CD4-positive, alpha-beta memory T cell (primary cell): ENCODE measurements at regions of chr16 and their contacts with region 1.

Region 1: DNA sequence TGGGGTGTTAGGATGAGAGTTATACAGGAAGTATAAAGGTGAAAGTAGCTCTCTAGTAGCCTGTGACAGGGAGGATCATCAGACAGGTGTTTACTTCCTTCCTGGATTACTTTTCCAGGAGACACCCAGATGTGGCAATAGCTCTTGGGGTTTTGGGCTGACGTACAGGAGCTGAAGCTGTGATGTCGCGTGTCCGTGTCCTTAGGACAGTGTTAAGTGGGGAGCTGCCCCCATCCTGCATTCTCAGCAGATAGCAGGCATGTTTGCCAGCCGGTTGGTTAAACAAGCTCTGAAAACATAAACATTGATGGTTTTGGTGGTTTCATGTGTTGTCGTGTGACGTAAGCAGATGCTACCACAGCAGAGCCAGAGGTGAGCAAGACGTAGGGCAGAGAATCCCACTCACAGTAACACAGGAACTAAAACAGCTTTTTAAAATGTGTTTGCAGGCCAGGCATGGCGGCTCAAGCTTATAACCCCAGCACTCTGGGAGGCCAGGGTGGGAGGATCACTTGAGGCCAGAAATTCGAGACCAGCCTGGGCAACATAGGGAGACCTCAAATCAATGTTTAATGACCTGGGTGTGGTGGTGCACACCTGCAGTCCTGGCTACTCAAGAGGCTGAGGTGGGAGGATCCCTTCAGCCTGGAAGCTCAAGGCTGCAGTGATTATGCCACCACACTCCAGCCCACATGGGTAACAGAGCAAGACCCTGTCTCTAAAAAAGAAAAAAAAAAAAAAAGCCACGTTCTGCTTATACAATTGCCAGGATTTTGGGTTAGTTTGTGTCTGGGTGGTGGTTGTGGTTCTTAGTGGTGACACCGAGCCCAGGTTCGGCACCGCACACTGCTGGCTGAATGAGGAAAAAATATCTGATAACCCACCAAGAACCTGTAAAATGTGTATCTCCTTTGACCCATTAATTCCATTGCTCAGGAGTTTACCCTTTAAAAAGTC is 18.2 kb upstream of the IL17C start:
- DNase-seq: peak; percentile 90 to 95 (median 92)
- H3K4me3 ChIP-seq: no peak overlapping the region
- H3K4me3 Mint-ChIP-seq: peak overlapping the region; percentile 46 to 85 (median 68)
- H3K27ac ChIP-seq: peak overlapping the region; percentile 65
- H3K27ac Mint-ChIP-seq: peak overlapping the region; percentile 98 to 100 (median 99)
- H3K4me1 ChIP-seq: peaks cover 45% of the 10 kb centered on the region
- H3K4me1 Mint-ChIP-seq: peaks cover 16 to 54% (median 31%) of the 10 kb centered on the region in 4 donors
- H3K27me3 ChIP-seq: no peaks in the 10 kb centered on the region
- H3K27me3 Mint-ChIP-seq: peaks cover 0 to 1% of the 10 kb centered on the region in 2 donors

Region 2: GRCh38 chr16:88382491-88383400 is 237.4 kb before region 1 on chr16 and contains the start of gene ZNF469:
- CTCF ChIA-PET with region 1: no interaction called
- POLR2A ChIA-PET with region 1: no interaction called
- intact Hi-C with region 1: no loop called
- DNase-seq: no peak
- H3K4me3 ChIP-seq: no peak within 1 kb of the TSS
- H3K4me3 Mint-ChIP-seq: peak within 1 kb of the TSS in 6 of 8 donors; percentile 29 to 67 (median 46)
- H3K27ac ChIP-seq: no peak within 1 kb of the TSS
- H3K27ac Mint-ChIP-seq: no peak within 1 kb of the TSS
- H3K4me1 ChIP-seq: peaks cover 6% of the 10 kb centered on the region
- H3K4me1 Mint-ChIP-seq: peaks cover 0 to 8% (median 4%) of the 10 kb centered on the region in 4 donors
- H3K27me3 ChIP-seq: peaks cover 11% of the 10 kb centered on the region
- H3K27me3 Mint-ChIP-seq: peaks cover 24 to 26% of the 10 kb centered on the region in 2 donors
- total RNA-seq, gene ZNF469: 0.61 to 0.64 TPM

Region 3: GRCh38 chr16:88589441-88589840 is 30.7 kb before region 1 on chr16:
- CTCF ChIA-PET with region 1: interaction called, 4 read pairs
- POLR2A ChIA-PET with region 1: interaction called, 15 read pairs
- intact Hi-C with region 1: no loop called
- DNase-seq: no peak
- H3K4me3 ChIP-seq: no peak overlapping the region
- H3K4me3 Mint-ChIP-seq: peak overlapping the region in 7 of 8 donors; percentile 0 to 67 (median 33)
- H3K27ac ChIP-seq: peak overlapping the region; percentile 28
- H3K27ac Mint-ChIP-seq: peak overlapping the region; percentile 31 to 96 (median 86)
- H3K4me1 ChIP-seq: peaks cover 47% of the 10 kb centered on the region
- H3K4me1 Mint-ChIP-seq: peaks cover 33 to 55% (median 50%) of the 10 kb centered on the region in 4 donors
- H3K27me3 ChIP-seq: no peaks in the 10 kb centered on the region
- H3K27me3 Mint-ChIP-seq: no peaks in the 10 kb centered on the region

Region 4: GRCh38 chr16:88639231-88640038 is 19.3 kb after region 1 on chr16:
- CTCF ChIA-PET with region 1: interaction called, 3 read pairs
- POLR2A ChIA-PET with region 1: interaction called, 34 read pairs
- intact Hi-C with region 1: loop called (anchors 2 kb)
- DNase-seq: no peak
- H3K4me3 ChIP-seq: no peak overlapping the region
- H3K4me3 Mint-ChIP-seq: peak overlapping the region in 2 of 8 donors; percentile 58 to 63
- H3K27ac ChIP-seq: no peak overlapping the region
- H3K27ac Mint-ChIP-seq: peak overlapping the region in 2 of 7 donors; percentile 84 to 92
- H3K4me1 ChIP-seq: peaks cover 50% of the 10 kb centered on the region
- H3K4me1 Mint-ChIP-seq: peaks cover 15 to 48% (median 32%) of the 10 kb centered on the region in 4 donors
- H3K27me3 ChIP-seq: peaks cover 11% of the 10 kb centered on the region
- H3K27me3 Mint-ChIP-seq: peaks cover 0 to 9% of the 10 kb centered on the region in 2 donors

Region 5: GRCh38 chr16:88662843-88663606 is 42.9 kb after region 1 on chr16 and contains the start of gene MVD:
- CTCF ChIA-PET with region 1: interaction called, 3 read pairs
- POLR2A ChIA-PET with region 1: interaction called, 14 read pairs
- intact Hi-C with region 1: no loop called
- DNase-seq: peak; percentile 93 to 96 (median 95)
- H3K4me3 ChIP-seq: peak within 1 kb of the TSS; percentile 65 to 95
- H3K4me3 Mint-ChIP-seq: peak within 1 kb of the TSS; percentile 91 to 95 (median 94)
- H3K27ac ChIP-seq: peak within 1 kb of the TSS; percentile 83
- H3K27ac Mint-ChIP-seq: peak within 1 kb of the TSS; percentile 80 to 98 (median 97)
- H3K4me1 ChIP-seq: peaks cover 16% of the 10 kb centered on the region
- H3K4me1 Mint-ChIP-seq: peaks cover 11 to 22% (median 15%) of the 10 kb centered on the region in 4 donors
- H3K27me3 ChIP-seq: no peaks in the 10 kb centered on the region
- H3K27me3 Mint-ChIP-seq: no peaks in the 10 kb centered on the region
- total RNA-seq, gene MVD: 49.2 to 57.0 TPM

Region 6: DNA sequence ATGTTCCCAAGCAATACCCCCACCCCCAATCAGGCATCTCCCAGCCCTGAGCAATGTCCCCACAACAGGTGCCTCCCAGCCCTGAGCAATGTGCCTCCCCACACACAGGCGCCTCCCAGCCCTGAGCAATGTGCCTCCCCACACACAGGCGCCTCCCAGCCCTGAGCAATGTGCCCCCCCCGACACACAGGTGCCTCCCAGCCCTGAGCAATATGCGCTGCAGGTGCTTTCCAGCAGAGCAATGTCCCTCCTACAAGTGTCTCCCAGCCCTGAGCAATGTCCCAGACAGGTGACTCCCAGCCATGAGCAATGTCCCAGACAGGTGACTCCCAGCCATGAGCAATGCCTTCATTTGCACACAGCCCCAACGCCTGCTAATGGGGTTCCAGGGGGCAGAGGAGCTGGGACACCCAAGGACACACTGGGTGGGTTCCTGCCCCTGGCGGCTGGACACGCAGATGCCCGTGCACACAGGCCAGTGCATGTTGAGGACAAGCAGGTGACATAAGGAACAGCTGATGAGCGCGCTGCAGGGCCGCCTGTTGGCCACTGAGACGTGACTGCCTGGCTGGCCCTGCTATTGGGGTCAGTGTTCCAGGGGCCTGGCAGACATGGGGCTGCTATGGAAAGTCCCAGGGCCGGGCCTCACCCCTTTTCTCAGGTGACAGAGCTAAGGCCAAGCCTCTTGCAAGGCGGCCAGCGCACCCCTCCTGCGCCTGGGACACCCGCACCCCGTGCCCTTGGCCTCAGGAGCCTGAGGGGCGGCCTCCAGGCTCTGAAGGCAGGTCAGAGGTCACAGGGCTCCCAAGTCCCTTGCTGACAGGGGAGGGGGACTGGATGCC is 273.2 kb after region 1 on chr16:
- CTCF ChIA-PET with region 1: no interaction called
- POLR2A ChIA-PET with region 1: no interaction called
- intact Hi-C with region 1: no loop called
- DNase-seq: no peak
- H3K4me3 ChIP-seq: no peak overlapping the region
- H3K4me3 Mint-ChIP-seq: no peak overlapping the region
- H3K27ac ChIP-seq: no peak overlapping the region
- H3K27ac Mint-ChIP-seq: no peak overlapping the region
- H3K4me1 ChIP-seq: no peaks in the 10 kb centered on the region
- H3K4me1 Mint-ChIP-seq: no peaks in the 10 kb centered on the region
- H3K27me3 ChIP-seq: no peaks in the 10 kb centered on the region
- H3K27me3 Mint-ChIP-seq: no peaks in the 10 kb centered on the region